ENCODE measurements at regions of chr19 and their contacts with region 1.

Region 1: GRCh38 chr19:41706741-41707501 is 1.5 kb upstream of the CEACAM5 start:
- DNase-seq: peak; percentile 86
- CTCF ChIP-seq: peak; percentile 72

Region 2: DNA sequence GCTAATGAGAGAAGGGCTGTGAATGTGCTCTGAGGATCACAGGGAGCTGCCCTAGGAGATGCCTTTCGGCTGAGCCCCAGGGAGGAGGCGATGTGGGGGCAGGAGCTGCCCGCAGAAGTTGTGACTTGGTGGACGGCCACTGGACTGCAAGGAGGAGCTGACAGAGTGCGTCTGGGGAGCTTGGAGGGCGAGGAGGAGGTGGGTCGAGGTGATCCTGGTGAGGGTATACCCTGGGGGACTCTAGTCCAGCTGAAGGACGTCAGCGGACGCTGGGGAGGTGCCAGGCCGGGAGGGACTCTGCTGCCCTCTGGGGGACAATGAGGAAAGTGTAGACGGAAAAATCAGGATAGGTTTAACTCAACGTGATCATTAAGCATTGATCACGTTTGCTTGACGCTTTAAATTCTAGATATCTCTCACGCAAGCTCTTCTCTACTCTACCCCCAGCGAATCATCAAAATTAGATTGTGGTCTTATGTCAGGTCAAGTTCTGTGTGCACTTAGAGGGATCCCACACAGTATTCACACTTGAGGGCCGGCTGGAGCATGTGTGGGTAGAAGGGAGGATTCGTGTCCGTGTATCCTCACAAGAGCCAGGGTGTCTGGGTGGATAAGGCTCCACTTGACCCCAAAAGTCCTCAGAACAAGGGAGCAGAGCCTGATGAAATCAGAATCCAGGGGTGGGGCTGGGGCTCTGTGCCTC is 15.5 kb before region 1 on chr19:
- CTCF ChIA-PET with region 1: interaction called, 11 read pairs
- POLR2A ChIA-PET with region 1: no interaction called
- DNase-seq: peak; percentile 56
- CTCF ChIP-seq: peak; percentile 42

Region 3: DNA sequence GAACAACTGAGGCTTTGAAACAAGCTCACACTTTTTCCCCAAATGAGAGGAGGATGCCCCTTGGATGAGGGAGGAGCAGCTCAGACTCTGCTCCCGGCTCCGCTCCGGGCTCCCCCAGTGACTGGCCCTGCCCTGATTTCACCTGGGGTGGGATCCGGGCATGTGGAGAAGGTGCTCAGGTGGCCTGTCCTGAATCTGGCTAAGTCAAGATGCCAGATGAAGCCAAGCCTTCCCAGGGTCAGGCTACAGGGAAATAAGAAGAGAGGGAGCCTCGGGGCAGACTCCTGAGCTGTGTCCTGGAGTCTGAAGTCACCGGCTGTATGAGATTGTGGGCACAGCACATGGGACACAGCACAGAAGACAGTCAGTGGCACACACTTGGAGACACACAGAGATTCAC is 11.8 kb after region 1 on chr19:
- CTCF ChIA-PET with region 1: interaction called, 29 read pairs
- POLR2A ChIA-PET with region 1: no interaction called
- DNase-seq: no peak
- CTCF ChIP-seq: no peak

Region 4: GRCh38 chr19:41785653-41786052 is 78.7 kb after region 1 on chr19:
- CTCF ChIA-PET with region 1: no interaction called
- POLR2A ChIA-PET with region 1: no interaction called
- DNase-seq: peak; percentile 83
- CTCF ChIP-seq: peak; percentile 90

Region 5: DNA sequence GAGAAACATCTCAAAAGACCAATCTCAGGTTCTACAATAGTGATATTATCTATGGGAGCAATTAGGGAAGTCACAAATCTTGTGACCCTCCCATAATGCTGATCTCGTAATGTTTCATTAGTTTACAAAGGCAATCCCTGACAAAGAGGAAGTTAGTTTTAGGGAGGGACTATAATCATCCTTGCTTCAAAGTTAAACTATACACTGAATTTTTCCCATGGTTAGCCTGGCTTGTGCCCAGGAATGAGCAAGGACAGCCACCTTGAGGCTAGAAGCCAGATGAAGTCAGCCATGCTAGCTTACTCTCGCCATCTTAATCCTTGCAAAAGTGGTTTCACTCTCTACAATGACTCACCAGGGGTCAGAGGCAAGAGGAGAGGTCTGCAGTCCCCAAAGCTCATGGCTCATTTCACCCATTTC is 94.9 kb after region 1 on chr19:
- CTCF ChIA-PET with region 1: no interaction called
- POLR2A ChIA-PET with region 1: no interaction called
- DNase-seq: no peak
- CTCF ChIP-seq: no peak